ENCODE measurements at regions of chr12 and their contacts with region 1.

Region 1: GRCh38 chr12:13211859-13212664 is 15.5 kb downstream of the EMP1 start:
- DNase-seq: peak in 4 of 6 donors; percentile 39 to 77 (median 47)
- ATAC-seq: peak; percentile 73 to 91 (median 85)
- H3K4me3 ChIP-seq: no peak overlapping the region
- H3K27ac ChIP-seq: no peak overlapping the region
- H3K4me1 ChIP-seq: no peaks in the 10 kb centered on the region
- H3K27me3 ChIP-seq: no peaks in the 10 kb centered on the region
- CTCF ChIP-seq: peak; percentile 68 to 87 (median 75)

Region 2: GRCh38 chr12:12491606-12492005 is 720.5 kb before region 1 on chr12:
- intact Hi-C with region 1: no loop called
- DNase-seq: no peak
- ATAC-seq: peak in 2 of 4 donors; percentile 13 to 37
- H3K4me3 ChIP-seq: no peak overlapping the region
- H3K27ac ChIP-seq: no peak overlapping the region
- H3K4me1 ChIP-seq: peaks cover 0 to 22% (median 19%) of the 10 kb centered on the region in 3 donors
- H3K27me3 ChIP-seq: no peaks in the 10 kb centered on the region
- CTCF ChIP-seq: no peak

Region 3: DNA sequence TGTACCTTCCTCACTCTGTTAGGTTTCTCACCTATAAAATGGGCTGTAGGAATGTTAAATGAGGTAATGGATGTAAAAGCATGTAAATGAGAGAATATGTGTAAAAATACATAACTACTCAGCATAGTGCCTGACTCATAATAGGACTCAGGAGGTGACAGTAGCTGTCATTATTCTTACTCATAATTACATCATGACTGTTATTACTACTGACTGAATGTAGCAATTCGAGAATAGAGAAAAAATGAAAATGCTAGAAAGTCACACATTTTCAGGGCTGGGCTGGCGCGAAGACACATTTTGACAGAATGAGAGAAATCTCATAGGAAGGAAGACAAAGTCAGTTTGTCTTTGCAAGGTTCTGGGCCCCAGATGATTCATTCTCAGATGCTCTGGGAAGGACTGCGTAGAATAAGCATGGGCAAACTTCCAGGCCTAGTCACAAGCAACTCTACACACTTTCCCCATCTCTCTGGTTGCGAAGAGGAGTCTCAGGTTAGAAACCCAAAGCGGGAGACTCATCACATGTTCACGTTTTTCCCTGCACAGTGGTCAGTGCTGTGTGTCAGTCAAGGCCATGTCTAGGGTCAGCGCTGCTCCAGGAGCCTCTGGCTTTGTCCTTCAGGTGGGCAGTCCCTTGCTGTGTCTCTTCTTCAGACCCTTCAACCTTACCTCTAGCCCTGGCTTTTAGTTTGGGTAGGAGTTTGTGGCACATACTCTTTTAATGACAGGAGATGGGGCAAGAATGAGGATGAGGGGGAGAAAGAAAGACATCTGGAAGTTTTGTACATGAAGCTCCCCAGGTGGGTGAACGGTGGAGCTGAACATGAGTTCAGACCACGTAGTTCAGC is 312.3 kb before region 1 on chr12:
- intact Hi-C with region 1: loop called in 1 of 3 experiments (anchors 10 kb)
- DNase-seq: no peak
- ATAC-seq: peak in 3 of 4 donors; percentile 17 to 34 (median 33)
- H3K4me3 ChIP-seq: no peak overlapping the region
- H3K27ac ChIP-seq: no peak overlapping the region
- H3K4me1 ChIP-seq: no peaks in the 10 kb centered on the region
- H3K27me3 ChIP-seq: no peaks in the 10 kb centered on the region
- CTCF ChIP-seq: no peak

Region 4: DNA sequence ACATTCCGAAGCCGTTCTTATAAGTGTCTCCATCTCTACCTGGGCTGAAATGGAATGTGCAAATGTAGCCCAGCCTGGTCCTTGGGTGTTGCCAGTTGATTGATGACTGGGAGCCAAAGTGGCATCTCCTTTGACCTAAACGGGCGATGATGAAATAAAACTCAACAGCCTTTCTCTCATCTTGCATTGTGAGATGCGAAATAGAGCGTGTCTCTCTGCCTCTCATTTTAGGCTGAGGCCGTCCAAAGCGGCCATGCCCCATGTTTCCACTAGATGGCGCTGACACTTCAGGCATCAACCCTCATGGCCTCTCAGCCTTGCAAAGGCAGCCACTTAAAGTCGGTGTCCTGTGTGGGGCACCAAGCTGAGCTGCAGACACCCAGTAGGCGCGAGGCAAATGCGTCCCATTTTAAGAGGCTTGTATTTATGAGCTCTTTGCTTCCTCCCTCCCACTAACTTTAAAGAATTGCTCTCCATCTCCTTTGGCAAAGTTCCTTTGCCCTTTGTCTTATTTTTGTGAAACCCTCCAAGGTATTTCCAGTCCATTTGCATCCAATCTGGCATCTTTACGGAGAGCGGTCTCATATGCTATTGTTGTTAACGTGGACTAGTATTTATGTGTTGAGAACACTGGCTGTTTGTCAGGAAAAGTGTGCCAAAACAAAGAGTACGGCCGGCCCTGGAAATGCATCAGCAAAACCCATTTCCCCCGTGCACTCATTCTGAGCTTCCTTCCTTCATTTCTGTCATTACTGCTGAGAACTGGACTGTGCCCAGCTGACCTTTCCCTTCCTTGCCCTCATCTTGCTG is 295.7 kb before region 1 on chr12:
- intact Hi-C with region 1: loop called in 2 of 3 experiments (anchors 5 kb)
- DNase-seq: peak; percentile 56 to 93 (median 84)
- ATAC-seq: peak; percentile 93 to 100 (median 98)
- H3K4me3 ChIP-seq: no peak overlapping the region
- H3K27ac ChIP-seq: no peak overlapping the region
- H3K4me1 ChIP-seq: no peaks in the 10 kb centered on the region
- H3K27me3 ChIP-seq: no peaks in the 10 kb centered on the region
- CTCF ChIP-seq: peak; percentile 93 to 97 (median 96)

Region 5: DNA sequence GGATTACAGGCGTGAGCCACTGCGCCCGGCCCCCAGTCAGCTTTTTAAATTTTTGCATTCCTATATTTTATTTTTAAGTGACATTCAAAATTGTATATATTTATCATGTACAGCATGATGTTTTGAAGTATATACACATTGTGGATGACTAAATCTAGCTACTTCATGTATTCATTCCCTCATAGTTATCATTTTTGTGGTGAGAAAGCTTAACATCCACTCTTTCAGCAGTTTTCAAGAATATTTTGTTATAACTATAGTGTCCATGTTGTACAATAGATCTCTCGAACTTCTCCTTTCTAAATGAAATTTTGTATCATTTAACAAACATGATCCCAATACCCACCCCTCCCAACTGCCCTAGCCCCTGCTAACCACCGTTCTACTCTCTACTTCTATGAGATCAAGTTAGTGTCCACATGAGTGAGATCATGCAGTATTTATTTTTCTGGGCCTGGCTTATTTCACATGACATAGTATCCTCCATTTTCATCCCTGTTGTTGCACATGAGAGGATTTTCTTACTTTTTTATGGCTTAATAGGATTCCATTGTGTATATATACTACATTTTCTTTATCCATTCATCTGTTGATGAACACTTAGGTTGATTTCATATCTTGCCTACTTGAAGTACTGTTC is 203.2 kb before region 1 on chr12:
- intact Hi-C with region 1: no loop called
- DNase-seq: no peak
- ATAC-seq: no peak
- H3K4me3 ChIP-seq: no peak overlapping the region
- H3K27ac ChIP-seq: no peak overlapping the region
- H3K4me1 ChIP-seq: peaks cover 0 to 8% (median 0%) of the 10 kb centered on the region in 3 donors
- H3K27me3 ChIP-seq: no peaks in the 10 kb centered on the region
- CTCF ChIP-seq: no peak

Region 6: DNA sequence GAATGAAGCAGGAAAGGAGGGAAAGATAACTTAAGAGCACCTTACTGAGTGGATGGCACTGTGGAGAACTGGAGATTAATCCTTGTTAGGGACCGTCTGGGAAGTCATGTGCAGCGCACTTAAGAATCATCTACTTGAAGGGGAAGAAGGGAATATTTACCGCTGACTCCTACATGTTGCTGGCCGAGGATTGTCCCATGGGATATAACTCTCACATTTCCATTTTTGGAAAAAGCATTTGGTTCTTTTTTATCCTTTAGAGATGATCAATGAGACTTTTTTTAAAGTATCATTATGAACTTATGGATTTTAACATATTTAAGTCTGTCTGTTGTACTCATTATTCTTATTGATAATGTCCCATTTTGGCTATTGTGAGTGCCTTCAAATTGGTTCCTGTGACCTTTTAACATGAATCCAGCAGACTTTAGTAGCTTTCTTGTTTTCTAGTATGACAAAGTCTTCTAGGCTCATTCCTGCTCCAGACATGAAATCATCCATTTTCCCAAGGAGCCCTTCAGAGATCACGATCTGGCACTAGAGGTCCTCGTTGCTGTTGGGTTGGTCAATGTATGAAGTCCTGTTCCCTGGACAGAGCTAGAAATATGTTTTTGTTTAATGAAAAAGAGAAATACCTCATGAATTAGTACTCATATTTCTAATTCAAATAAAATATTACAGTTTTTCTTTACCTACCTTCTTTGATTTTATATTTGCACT is 188.1 kb before region 1 on chr12:
- intact Hi-C with region 1: loop called in 1 of 3 experiments (anchors 5 kb)
- DNase-seq: peak in 2 of 6 donors; percentile 8 to 38
- ATAC-seq: peak in 2 of 4 donors; percentile 80 to 94
- H3K4me3 ChIP-seq: no peak overlapping the region
- H3K27ac ChIP-seq: no peak overlapping the region
- H3K4me1 ChIP-seq: no peaks in the 10 kb centered on the region
- H3K27me3 ChIP-seq: no peaks in the 10 kb centered on the region
- CTCF ChIP-seq: peak in 1 of 4 donors; percentile 14

Region 7: GRCh38 chr12:13114251-13115052 is 97.6 kb before region 1 on chr12:
- intact Hi-C with region 1: loop called in 1 of 3 experiments (anchors 10 kb)
- DNase-seq: no peak
- ATAC-seq: peak in 1 of 4 donors; percentile 39
- H3K4me3 ChIP-seq: no peak overlapping the region
- H3K27ac ChIP-seq: no peak overlapping the region
- H3K4me1 ChIP-seq: no peaks in the 10 kb centered on the region
- H3K27me3 ChIP-seq: no peaks in the 10 kb centered on the region
- CTCF ChIP-seq: no peak

Region 8: DNA sequence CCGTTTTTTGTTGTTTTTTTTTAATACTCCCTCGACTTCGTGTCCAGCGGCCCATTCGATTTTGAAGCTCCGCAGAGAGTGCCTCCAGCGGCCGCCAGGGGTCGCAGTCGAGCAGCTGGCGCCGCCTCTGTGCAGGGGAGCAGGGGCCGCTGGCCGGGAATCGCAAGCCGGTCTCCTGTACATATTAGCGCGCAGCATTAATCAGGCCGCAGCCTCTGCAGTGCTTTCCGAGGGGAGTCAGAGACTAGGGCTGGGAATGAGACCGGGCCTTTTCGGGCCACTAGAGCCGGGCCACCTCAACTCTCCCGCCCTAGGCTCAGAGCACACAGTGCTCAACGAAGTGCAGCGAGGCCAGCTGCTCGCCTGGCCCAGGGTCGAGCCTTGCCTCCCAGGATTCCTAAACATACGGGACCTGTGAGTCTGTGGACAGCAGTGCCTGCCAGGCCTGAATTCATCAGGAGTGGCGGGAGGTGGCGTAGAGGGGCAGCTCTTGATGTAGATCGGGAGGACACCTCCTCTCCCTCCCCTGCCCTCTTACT is 66.3 kb after region 1 on chr12:
- intact Hi-C with region 1: no loop called
- DNase-seq: peak; percentile 44 to 91 (median 77)
- ATAC-seq: peak; percentile 94 to 99 (median 98)
- H3K4me3 ChIP-seq: no peak overlapping the region
- H3K27ac ChIP-seq: no peak overlapping the region
- H3K4me1 ChIP-seq: peaks cover 0 to 3% (median 0%) of the 10 kb centered on the region in 3 donors
- H3K27me3 ChIP-seq: peaks cover 0 to 11% (median 0%) of the 10 kb centered on the region in 4 donors
- CTCF ChIP-seq: peak; percentile 95 to 99 (median 98)

Region 9: DNA sequence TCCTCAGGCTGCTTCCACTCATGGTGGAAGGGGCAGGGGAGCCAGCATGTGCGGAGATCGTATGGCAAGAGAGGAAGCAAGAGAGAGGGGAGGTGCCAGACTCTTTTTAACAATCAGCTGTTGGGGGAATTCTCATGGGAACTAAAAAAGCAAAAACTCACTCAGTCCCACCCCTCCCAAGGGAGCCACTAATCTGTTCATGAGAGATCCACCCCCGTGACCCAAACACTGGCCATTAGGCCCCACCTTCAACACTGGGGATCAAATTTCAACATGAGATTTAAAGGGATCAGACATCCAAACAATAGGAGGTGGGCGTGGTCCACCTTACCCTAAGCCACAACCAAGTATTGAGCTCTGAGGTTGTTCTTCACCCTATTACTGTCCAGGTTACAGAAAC is 394.2 kb after region 1 on chr12:
- intact Hi-C with region 1: no loop called
- DNase-seq: no peak
- ATAC-seq: no peak
- H3K4me3 ChIP-seq: no peak overlapping the region
- H3K27ac ChIP-seq: no peak overlapping the region
- H3K4me1 ChIP-seq: no peaks in the 10 kb centered on the region
- H3K27me3 ChIP-seq: no peaks in the 10 kb centered on the region
- CTCF ChIP-seq: no peak